Caco-2 (cell line): ENCODE measurements at regions of chr14 and their contacts with region 1.

Region 1: GRCh38 chr14:22994762-22995275 is 12.5 kb upstream of the AJUBA start:
- DNase-seq: peak in 1 of 2 experiments; percentile 56
- H3K4me3 ChIP-seq: no peak overlapping the region
- H3K4me3 Mint-ChIP-seq: peak overlapping the region; percentile 12
- H3K27ac Mint-ChIP-seq: peak overlapping the region; percentile 51
- H3K4me1 ChIP-seq: peaks cover 10% of the 10 kb centered on the region
- H3K4me1 Mint-ChIP-seq: peaks cover 3% of the 10 kb centered on the region
- H3K27me3 ChIP-seq: no peaks in the 10 kb centered on the region
- H3K27me3 Mint-ChIP-seq: no peaks in the 10 kb centered on the region
- CTCF ChIP-seq: peak; percentile 58 to 60

Region 2: DNA sequence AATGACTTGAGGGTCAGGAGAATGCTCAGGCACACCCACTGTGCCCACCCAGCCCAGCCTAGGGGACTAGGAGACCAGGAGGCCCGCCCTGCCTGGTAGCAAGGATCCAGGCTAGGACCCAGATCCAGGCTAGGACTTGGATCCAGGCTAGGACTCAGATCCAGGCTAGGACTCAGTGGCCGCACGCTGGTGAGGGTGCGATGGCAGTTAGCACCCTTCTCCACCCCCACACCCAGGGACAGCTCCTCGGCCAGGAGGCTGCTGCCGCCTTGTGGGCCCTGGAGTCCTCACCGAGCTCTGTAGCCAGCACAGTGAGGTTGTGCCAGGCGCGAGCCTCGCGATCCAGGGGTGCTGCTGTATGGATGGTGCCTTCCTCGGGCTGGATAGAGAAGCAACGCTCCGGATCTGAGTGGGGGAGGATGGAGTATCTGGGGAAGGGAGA is 57.4 kb after region 1 on chr14:
- CTCF ChIA-PET with region 1: interaction called, 57 read pairs
- POLR2A ChIA-PET with region 1: interaction called, 3 read pairs
- intact Hi-C with region 1: no loop called
- DNase-seq: no peak
- H3K4me3 ChIP-seq: no peak overlapping the region
- H3K4me3 Mint-ChIP-seq: no peak overlapping the region
- H3K27ac Mint-ChIP-seq: no peak overlapping the region
- H3K4me1 ChIP-seq: peaks cover 7% of the 10 kb centered on the region
- H3K4me1 Mint-ChIP-seq: peaks cover 15% of the 10 kb centered on the region
- H3K27me3 ChIP-seq: no peaks in the 10 kb centered on the region
- H3K27me3 Mint-ChIP-seq: no peaks in the 10 kb centered on the region
- CTCF ChIP-seq: peak in 1 of 2 experiments; percentile 32